Posterior vena cava (tissue), 2 donors: ENCODE measurements at regions of chr17 and their contacts with region 1.

Region 1: GRCh38 chr17:68172461-68172954 is 75.3 kb upstream of the AMZ2 start:
- DNase-seq: no peak

Region 2: DNA sequence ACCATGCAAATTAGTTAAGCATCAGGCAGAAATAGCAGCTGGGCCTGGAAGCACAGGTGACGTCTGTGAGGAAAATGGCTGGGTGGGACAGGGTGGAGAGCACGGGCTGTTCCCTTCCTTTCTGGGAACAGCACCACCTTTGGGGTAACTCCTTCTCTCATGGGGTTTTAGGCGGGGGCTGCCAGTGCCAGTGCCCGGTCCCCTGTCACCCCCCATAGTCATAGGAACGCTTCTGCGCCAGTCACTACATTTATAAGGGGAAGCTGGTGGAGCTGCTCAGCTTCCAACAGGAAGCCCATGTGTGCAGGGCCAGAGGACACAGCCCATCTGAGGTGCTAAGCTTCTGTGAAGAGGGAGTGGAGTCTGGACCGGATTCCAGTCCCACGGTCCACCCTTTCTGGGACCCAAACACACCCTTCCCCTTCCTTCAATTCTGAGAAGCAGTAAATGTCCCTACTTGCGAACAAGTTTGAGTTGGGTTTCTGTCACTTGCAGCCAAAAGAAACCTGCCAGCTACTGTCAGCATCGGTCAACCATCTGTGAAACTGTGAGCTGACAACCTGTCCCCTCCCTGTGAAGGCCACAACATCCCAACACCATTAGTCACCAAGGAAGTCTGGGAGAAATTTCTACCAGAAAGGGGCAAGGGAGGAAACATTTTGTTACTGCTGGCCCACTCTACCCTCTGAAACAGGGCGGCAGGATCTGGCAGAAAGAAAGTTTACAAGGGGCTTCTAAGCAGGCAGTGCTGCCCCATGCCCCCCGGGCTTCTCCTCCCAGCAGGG is 10.7 kb before region 1 on chr17:
- intact Hi-C with region 1: no loop called
- DNase-seq: no peak

Region 3: DNA sequence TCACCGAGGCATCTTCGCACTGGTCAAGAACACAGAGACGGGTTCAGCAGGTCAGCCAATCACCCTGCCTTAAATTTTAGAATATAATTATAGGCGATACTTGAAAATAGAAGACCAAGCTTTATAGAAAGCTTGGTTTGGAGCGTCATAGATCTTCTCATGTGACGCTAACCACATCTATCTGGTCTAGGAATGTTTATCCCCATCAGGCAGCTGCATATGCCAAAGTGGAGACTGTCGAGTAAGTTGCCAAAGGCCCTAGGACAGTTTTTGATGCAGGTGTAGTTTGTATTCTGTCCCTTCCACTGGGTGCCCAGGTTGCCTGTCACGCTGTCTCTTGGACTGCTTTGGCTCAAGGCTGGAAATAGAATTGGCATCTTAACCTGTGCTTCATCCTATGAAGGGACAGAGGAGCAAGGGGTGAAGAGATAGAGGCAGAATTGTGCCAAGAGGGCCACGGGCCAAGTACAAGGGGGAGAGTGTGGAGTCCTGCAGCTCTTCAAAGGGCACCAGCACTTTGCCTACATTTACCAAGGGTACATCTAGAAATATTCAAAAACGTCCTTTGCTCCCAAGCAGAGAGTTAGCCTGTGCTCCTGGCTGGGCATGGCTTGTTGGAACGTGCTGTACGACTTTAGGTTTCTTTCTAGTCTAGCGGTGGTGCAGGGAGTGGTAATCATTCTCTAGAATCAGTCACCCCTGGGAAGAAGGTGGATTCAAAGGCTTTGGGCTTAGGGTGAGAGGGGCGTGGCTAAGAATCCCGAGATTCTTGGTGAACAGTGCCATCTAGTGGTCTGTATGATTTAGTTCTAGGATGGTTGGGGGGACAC is 290.1 kb after region 1 on chr17:
- intact Hi-C with region 1: loop called in 1 of 2 experiments (anchors 10 kb)
- DNase-seq: no peak